AG04450 (cell line): ENCODE measurements at regions of chr15 and their contacts with region 1.

Region 1: DNA sequence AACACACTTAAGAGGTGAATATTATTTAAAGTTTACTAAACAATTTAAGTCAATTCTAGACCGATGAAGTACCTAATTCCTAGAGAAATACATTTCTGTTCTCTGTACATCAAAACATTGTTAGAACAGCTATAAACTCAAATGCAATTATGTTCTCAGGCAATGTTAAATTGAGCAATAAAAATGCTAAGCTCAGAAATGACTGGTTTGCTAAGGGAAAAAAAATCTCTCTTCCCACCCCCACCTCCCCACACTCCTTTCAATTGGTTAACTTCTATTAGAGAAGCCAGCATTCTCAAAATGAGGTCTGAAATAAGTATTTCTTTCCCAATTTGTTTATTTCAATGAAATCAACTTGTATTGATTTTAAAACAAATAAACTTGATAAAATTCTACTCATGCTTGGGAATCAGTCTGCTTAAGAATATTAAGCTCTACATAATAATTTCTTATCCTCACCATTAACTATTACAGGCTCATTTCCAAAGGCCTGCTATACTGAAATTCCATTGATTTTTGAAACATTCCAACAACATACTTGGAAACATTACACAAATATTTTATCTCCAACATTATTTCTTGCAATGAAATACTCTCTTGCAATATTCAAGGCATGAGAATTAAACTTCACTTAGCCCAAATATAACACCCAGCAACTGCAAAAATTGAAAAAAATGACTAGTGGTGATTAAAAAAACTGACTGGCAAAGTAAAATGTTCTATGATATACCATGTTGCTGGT is 22.6 kb downstream of the TSPAN3 start:
- DNase-seq: no peak
- H3K4me3 ChIP-seq: no peak overlapping the region
- H3K27ac ChIP-seq: no peak overlapping the region
- H3K27me3 ChIP-seq: no peaks in the 10 kb centered on the region
- CTCF ChIP-seq: no peak

Region 2: DNA sequence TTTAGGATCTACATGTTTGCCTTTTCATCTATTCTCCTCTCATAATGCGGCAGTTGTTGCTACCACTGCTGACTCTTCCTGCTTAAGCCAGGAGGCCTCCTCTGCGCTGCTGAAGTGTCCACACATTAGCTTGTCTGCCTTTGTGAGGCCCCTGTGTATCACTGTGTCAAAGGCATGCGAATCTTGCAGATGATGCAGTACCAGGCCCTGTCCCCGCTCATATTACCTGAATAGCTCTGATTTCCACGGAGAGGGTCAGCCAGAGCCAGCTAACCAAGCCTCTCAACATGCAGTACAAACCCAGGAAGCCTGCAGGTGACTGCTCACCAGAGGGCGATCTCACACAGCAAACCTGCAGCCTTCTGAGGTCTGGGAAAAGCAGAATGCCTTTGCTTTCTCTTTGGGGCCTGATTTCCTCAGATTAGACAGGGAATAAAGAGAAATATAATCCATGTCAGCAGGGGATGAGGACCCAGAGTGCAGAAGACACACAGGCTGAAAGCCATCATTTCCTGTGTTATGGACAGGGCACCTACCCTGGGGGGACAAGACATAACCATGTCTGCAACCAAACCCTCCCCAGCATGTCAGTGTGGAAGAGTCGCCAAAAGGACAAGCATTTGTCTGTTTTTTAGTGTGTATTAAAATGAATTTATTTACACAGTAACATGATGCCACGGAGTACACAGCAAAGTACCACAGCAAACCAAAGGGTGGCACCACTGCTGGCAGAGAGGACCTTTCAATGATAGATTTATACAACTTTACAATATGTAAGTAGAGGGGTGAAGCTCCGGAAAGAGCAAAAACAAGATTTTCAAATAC is 59.4 kb after region 1 on chr15:
- CTCF ChIA-PET with region 1: interaction called, 10 read pairs
- POLR2A ChIA-PET with region 1: no interaction called
- DNase-seq: peak; percentile 27
- H3K4me3 ChIP-seq: no peak overlapping the region
- H3K27ac ChIP-seq: no peak overlapping the region
- H3K27me3 ChIP-seq: no peaks in the 10 kb centered on the region
- CTCF ChIP-seq: peak; percentile 79